ENCODE measurements at regions of chr20 and their contacts with region 1.

Region 1: GRCh38 chr20:58980700-58981627 is at the start of gene NELFCD:
- DNase-seq: peak; percentile 79
- H3K4me3 ChIP-seq: peak within 1 kb of the TSS; percentile 84 to 98 (median 96)
- H3K27ac ChIP-seq: peak within 1 kb of the TSS; percentile 48
- H3K4me1 ChIP-seq: peaks cover 3% of the 10 kb centered on the region
- H3K27me3 ChIP-seq: peaks cover 0 to 1% of the 10 kb centered on the region in 2 experiments
- CTCF ChIP-seq: no peak
- POLR2A ChIP-seq: peak; percentile 79
- total RNA-seq, gene NELFCD: 92.5 and 93.2 TPM in 2 replicates

Region 2: GRCh38 chr20:58117944-58118343 is 863.0 kb before region 1 on chr20:
- CTCF ChIA-PET with region 1: no interaction called
- POLR2A ChIA-PET with region 1: no interaction called
- dilution Hi-C with region 1: no loop called
- intact Hi-C with region 1: no loop called
- DNase-seq: no peak
- H3K4me3 ChIP-seq: no peak overlapping the region
- H3K27ac ChIP-seq: no peak overlapping the region
- H3K4me1 ChIP-seq: no peaks in the 10 kb centered on the region
- H3K27me3 ChIP-seq: peaks cover 2 to 3% of the 10 kb centered on the region in 2 experiments
- CTCF ChIP-seq: no peak
- POLR2A ChIP-seq: no peak

Region 3: GRCh38 chr20:58875541-58876134 is 105.3 kb before region 1 on chr20:
- CTCF ChIA-PET with region 1: interaction called, 12 read pairs
- POLR2A ChIA-PET with region 1: no interaction called
- dilution Hi-C with region 1: no loop called
- intact Hi-C with region 1: loop called (anchors 1 kb)
- DNase-seq: peak; percentile 55
- H3K4me3 ChIP-seq: no peak overlapping the region
- H3K27ac ChIP-seq: peak overlapping the region; percentile 18
- H3K4me1 ChIP-seq: peaks cover 19% of the 10 kb centered on the region
- H3K27me3 ChIP-seq: peaks cover 0 to 6% of the 10 kb centered on the region in 2 experiments
- CTCF ChIP-seq: no peak
- POLR2A ChIP-seq: no peak

Region 4: GRCh38 chr20:58907399-58908137 is 73.4 kb before region 1 on chr20:
- CTCF ChIA-PET with region 1: interaction called, 4 read pairs
- POLR2A ChIA-PET with region 1: no interaction called
- dilution Hi-C with region 1: no loop called
- intact Hi-C with region 1: loop called (anchors 1 kb)
- DNase-seq: peak; percentile 97
- H3K4me3 ChIP-seq: peak overlapping the region in 1 of 3 experiments; percentile 39
- H3K27ac ChIP-seq: peak overlapping the region; percentile 97
- H3K4me1 ChIP-seq: peaks cover 34% of the 10 kb centered on the region
- H3K27me3 ChIP-seq: no peaks in the 10 kb centered on the region
- CTCF ChIP-seq: no peak
- POLR2A ChIP-seq: no peak

Region 5: DNA sequence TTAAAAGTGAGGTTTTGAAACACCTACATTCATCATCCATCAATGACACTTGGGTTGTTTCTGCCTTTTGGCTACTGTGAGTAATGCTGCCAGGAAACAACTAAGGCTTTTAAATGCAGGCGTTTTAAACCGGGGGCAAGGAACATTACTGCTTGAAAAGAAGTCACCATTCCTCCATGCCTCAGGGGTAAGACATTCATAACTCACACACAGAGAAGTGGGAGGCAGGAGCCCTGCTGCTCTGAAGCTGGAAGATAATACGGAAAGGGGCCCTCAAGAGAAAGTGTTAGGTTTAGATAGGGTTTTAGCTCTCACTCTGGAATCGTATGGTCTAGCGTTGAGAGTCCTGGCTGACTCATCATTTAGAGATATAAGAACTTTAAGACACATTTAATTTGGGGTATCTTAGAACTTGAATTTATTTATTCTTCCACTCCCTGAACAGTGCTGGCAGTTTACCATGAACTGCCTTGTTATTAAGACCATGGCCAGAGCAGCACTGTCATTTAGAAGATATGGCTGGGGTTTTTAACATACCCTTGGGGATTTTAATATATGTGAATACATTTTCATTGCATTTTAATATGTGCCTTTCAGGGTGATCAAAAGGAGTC is 40.1 kb after region 1 on chr20:
- CTCF ChIA-PET with region 1: no interaction called
- POLR2A ChIA-PET with region 1: no interaction called
- dilution Hi-C with region 1: no loop called
- intact Hi-C with region 1: loop called (anchors 1 kb)
- DNase-seq: no peak
- H3K4me3 ChIP-seq: no peak overlapping the region
- H3K27ac ChIP-seq: no peak overlapping the region
- H3K4me1 ChIP-seq: peaks cover 7% of the 10 kb centered on the region
- H3K27me3 ChIP-seq: no peaks in the 10 kb centered on the region
- CTCF ChIP-seq: no peak
- POLR2A ChIP-seq: no peak

Region 6: DNA sequence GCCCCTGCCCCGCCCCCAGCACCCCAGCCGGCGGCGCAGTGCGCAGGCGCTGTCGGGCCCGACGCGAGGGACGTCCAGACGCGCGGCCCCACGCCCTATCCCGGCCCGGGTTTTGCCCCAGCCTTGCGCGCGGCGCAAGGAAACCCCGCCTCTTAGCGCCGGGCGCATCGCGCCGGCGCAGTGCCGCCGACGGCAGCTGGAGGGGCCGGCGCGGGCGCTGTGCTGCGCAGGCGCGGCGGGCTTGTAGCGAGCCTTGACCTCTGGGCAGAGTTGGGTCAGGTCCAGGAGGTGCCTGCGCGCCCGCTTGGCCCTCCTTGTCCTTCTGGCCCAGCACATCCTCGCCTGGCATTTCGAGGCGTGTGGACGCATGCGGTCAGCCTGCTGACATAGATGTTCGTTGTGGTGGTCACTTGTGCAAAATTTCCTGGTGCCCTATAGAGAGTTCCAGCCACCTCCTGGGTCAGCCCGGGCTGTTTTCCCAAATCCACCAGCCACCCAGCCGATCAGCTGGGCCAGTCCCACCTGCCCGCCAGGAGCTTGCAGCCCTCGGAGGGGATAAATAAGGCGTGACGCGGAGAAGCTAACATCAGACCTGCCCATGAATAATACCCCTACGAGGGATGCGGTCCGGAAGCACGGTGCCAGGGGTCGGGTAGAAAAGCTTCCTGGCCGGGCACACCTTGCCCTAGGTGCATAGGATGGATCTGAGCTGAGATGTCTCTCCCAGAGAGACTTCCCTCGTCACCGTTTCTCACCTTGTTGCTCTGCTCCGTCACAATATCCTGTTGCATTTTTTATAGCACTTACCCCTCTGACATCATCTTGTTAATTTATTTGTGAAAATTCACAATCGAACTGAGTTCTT is 62.1 kb after region 1 on chr20:
- CTCF ChIA-PET with region 1: no interaction called
- POLR2A ChIA-PET with region 1: no interaction called
- dilution Hi-C with region 1: no loop called
- intact Hi-C with region 1: loop called (anchors 2 kb)
- DNase-seq: peak; percentile 90
- H3K4me3 ChIP-seq: peak overlapping the region; percentile 26 to 91 (median 69)
- H3K27ac ChIP-seq: no peak overlapping the region
- H3K4me1 ChIP-seq: peaks cover 8% of the 10 kb centered on the region
- H3K27me3 ChIP-seq: peaks cover 0 to under 1% of the 10 kb centered on the region in 2 experiments
- CTCF ChIP-seq: no peak
- POLR2A ChIP-seq: no peak

Measured in endothelial cell of umbilical vein (primary cell).